ENCODE measurements at regions of chr9 and their contacts with region 1.

Region 1: GRCh38 chr9:34403554-34404380 is 27.1 kb upstream of the MYORG start:
- DNase-seq: peak; percentile 51 to 77 (median 69)
- H3K4me3 ChIP-seq: no peak overlapping the region
- H3K27ac ChIP-seq: no peak overlapping the region
- H3K4me1 ChIP-seq: no peaks in the 10 kb centered on the region
- H3K27me3 ChIP-seq: no peaks in the 10 kb centered on the region
- CTCF ChIP-seq: peak; percentile 66 to 88 (median 75)
- EP300 ChIP-seq: no peak
- POLR2A ChIP-seq: no peak

Region 2: GRCh38 chr9:34010979-34011378 is 392.8 kb before region 1 on chr9:
- intact Hi-C with region 1: no loop called
- DNase-seq: no peak
- H3K4me3 ChIP-seq: no peak overlapping the region
- H3K27ac ChIP-seq: no peak overlapping the region
- H3K4me1 ChIP-seq: no peaks in the 10 kb centered on the region
- H3K27me3 ChIP-seq: no peaks in the 10 kb centered on the region
- CTCF ChIP-seq: peak in 1 of 3 donors; percentile 23
- EP300 ChIP-seq: no peak
- POLR2A ChIP-seq: no peak

Region 3: GRCh38 chr9:34500623-34501267 is 97.0 kb after region 1 on chr9:
- intact Hi-C with region 1: loop called in 3 of 4 experiments (anchors 2 to 10 kb)
- DNase-seq: peak; percentile 32 to 68 (median 64)
- H3K4me3 ChIP-seq: no peak overlapping the region
- H3K27ac ChIP-seq: no peak overlapping the region
- H3K4me1 ChIP-seq: peaks cover 5% of the 10 kb centered on the region
- H3K27me3 ChIP-seq: no peaks in the 10 kb centered on the region
- CTCF ChIP-seq: peak; percentile 72 to 81 (median 80)
- EP300 ChIP-seq: no peak
- POLR2A ChIP-seq: no peak

Region 4: DNA sequence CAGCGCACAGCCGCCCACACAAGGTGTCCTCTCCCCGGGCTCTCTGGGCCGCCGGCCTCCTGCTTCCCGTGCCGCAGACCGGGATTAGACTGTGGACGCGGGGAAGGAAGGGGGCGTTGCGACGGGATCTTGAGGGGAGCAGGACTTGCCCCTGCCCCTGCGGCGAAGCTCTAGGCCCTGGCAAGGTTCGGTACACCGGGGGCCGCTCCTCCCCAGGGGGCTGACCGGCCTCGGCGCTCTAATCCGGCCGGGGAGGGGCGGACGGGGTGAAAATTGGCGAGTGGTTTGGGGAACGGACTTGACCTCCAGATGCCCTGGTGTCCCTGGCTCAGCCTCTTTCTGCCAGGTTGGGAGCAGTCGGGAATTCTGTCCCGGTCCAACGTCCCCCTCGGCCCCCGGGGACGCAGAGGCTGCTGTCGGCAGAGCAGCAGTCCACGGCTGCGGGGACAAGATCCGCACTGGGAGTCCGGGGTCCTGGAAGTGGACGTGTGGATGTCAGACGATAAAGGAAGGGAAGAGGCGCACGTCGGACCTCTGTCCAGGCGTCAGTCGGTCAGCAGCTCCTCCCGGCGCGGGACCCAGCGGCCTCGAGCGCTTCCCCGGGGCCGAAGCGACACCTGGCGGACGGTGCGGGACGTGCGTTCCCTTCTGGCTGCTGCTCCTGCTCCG is 187.6 kb after region 1 on chr9:
- intact Hi-C with region 1: loop called in 2 of 4 experiments (anchors 5 kb)
- DNase-seq: peak; percentile 75 to 93 (median 88)
- H3K4me3 ChIP-seq: no peak overlapping the region
- H3K27ac ChIP-seq: no peak overlapping the region
- H3K4me1 ChIP-seq: peaks cover 3% of the 10 kb centered on the region
- H3K27me3 ChIP-seq: no peaks in the 10 kb centered on the region
- CTCF ChIP-seq: peak; percentile 81 to 93 (median 90)
- EP300 ChIP-seq: no peak
- POLR2A ChIP-seq: no peak

Region 5: DNA sequence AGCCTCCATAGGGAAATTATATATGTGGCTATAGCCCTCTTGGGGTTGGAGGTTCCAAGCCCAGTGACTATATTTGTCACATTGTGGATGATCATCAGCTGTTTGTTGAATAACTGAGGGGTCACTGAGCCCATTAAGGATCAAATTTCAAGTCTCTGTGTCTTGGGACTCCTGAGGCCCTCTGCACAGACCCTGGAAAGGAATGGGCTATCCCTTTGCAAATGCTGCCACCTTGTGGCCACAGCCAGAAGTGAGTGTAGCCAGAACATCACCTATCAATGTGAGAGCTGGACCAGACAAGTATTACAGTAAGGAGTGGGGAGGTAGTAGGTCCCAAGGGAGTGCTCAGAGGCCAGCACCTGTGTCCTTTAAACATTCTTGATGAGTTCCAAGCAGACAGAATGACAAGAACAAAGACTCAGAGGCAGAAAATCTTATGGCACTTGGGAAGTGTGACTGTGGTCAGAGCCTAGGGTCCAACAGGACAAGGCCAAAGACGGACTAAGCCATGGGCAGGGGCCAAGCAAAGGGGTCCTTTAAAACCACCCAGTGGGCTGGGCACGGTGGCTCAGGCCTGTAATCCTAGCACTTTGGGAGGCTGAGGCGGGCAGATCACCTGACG is 200.0 kb after region 1 on chr9:
- intact Hi-C with region 1: loop called in 2 of 4 experiments (anchors 5 to 10 kb)
- DNase-seq: peak; percentile 73 to 91 (median 88)
- H3K4me3 ChIP-seq: no peak overlapping the region
- H3K27ac ChIP-seq: no peak overlapping the region
- H3K4me1 ChIP-seq: no peaks in the 10 kb centered on the region
- H3K27me3 ChIP-seq: no peaks in the 10 kb centered on the region
- CTCF ChIP-seq: peak; percentile 83 to 92 (median 87)
- EP300 ChIP-seq: no peak
- POLR2A ChIP-seq: no peak